ENCODE measurements at regions of chr12 and their contacts with region 1.

Region 1: GRCh38 chr12:15584366-15585041 is 204.7 kb downstream of the EPS8 start:
- H3K4me3 Mint-ChIP-seq: no peak overlapping the region
- H3K27ac Mint-ChIP-seq: no peak overlapping the region
- H3K4me1 Mint-ChIP-seq: no peaks in the 10 kb centered on the region
- H3K27me3 Mint-ChIP-seq: no peaks in the 10 kb centered on the region

Region 2: GRCh38 chr12:15181017-15181683 is 403.4 kb before region 1 on chr12:
- intact Hi-C with region 1: no loop called
- H3K4me3 Mint-ChIP-seq: no peak overlapping the region
- H3K27ac Mint-ChIP-seq: no peak overlapping the region
- H3K4me1 Mint-ChIP-seq: peaks cover under 1% of the 10 kb centered on the region
- H3K27me3 Mint-ChIP-seq: no peaks in the 10 kb centered on the region

Region 3: GRCh38 chr12:15276088-15276698 is 308.3 kb before region 1 on chr12:
- intact Hi-C with region 1: loop called (anchors 5 kb)
- H3K4me3 Mint-ChIP-seq: no peak overlapping the region
- H3K27ac Mint-ChIP-seq: no peak overlapping the region
- H3K4me1 Mint-ChIP-seq: peaks cover 7% of the 10 kb centered on the region
- H3K27me3 Mint-ChIP-seq: peaks cover 29% of the 10 kb centered on the region